ENCODE measurements at regions of chr6 and their contacts with region 1.

Region 1: GRCh38 chr6:45436544-45437438 is 59.1 kb upstream of the SUPT3H start:
- DNase-seq: peak in 1 of 9 donors; percentile 31
- ATAC-seq: peak; percentile 85
- H3K4me3 ChIP-seq: no peak overlapping the region
- H3K4me3 Mint-ChIP-seq: peak overlapping the region in 4 of 10 donors; percentile 2 to 75 (median 48)
- H3K27ac ChIP-seq: no peak overlapping the region
- H3K27ac Mint-ChIP-seq: peak overlapping the region in 2 of 9 donors; percentile 38 to 86
- H3K4me1 ChIP-seq: peaks cover 18 to 32% of the 10 kb centered on the region in 2 donors
- H3K4me1 Mint-ChIP-seq: peaks cover 36 to 71% (median 56%) of the 10 kb centered on the region in 7 donors
- H3K27me3 ChIP-seq: no peaks in the 10 kb centered on the region
- H3K27me3 Mint-ChIP-seq: peaks cover 0 to 7% (median 0%) of the 10 kb centered on the region in 5 donors

Region 2: DNA sequence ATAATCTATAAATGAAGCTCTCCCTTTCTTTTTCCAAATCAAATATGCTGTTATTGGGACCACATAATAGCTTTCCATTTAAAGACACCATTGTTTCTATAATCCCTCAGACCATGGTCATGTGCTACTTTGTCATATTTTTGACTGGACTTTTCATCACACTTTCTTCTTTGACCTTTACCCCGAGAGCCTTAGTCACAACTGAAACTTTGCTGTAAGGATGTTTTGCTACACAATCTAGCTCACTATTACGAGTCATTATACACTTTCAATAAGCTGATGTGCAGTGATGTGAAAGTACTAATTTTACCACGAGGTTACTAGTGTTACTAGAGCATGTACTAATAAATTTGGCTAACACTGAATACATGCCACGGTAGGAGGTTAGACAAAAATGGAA is 475.9 kb before region 1 on chr6:
- CTCF ChIA-PET with region 1: no interaction called
- POLR2A ChIA-PET with region 1: no interaction called
- intact Hi-C with region 1: no loop called
- DNase-seq: no peak
- ATAC-seq: no peak
- H3K4me3 ChIP-seq: no peak overlapping the region
- H3K4me3 Mint-ChIP-seq: no peak overlapping the region
- H3K27ac ChIP-seq: no peak overlapping the region
- H3K27ac Mint-ChIP-seq: no peak overlapping the region
- H3K4me1 ChIP-seq: no peaks in the 10 kb centered on the region
- H3K4me1 Mint-ChIP-seq: peaks cover 0 to 11% (median 5%) of the 10 kb centered on the region in 7 donors
- H3K27me3 ChIP-seq: no peaks in the 10 kb centered on the region
- H3K27me3 Mint-ChIP-seq: no peaks in the 10 kb centered on the region

Region 3: DNA sequence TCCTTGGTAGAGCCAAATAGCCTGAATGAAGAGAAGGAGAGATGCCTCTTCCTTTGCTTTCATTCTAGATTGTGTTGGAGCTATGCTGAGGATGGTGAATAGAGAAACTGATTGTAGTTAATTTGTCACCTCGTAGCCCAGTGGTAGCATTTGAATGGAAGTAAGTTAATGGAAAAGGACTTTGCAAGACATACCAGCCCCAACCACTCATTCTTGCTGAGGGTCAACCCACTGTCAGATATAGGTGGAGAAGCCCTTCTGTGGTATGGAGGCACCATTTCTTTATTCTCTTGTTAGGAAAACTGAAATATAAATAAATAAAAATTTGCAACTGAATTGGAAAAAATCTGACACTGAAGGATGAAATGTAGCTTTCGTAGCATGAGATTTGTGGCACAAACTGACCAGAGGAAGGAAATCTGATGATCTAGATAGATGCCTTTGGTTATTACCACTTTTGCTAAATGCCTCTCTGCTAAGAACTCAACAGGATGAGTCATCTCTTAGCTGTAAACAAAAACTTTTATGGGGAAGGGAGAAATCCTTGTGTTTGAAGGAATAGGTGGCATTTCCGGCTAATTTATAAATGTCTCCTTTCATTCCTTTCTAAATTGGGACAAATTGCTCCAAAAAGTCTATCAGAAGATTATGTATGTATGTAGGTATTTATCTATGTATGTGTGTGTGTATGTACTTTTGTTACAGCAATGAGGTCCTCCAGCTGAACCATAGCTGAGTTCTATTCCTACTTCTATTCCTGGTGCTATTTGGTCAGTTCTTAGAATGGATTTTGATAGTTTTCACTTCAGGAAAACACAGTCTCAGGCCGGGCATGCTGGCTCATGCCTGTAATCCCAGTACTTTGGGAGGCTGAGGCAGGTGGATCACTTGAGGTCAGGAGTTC is 17.5 kb after region 1 on chr6:
- CTCF ChIA-PET with region 1: no interaction called
- POLR2A ChIA-PET with region 1: interaction called, 4 read pairs
- intact Hi-C with region 1: loop called (anchors 1 to 2 kb)
- DNase-seq: no peak
- ATAC-seq: peak; percentile 58
- H3K4me3 ChIP-seq: no peak overlapping the region
- H3K4me3 Mint-ChIP-seq: peak overlapping the region in 1 of 10 donors; percentile 11
- H3K27ac ChIP-seq: no peak overlapping the region
- H3K27ac Mint-ChIP-seq: no peak overlapping the region
- H3K4me1 ChIP-seq: peaks cover 16 to 30% of the 10 kb centered on the region in 2 donors
- H3K4me1 Mint-ChIP-seq: peaks cover 23 to 50% (median 30%) of the 10 kb centered on the region in 7 donors
- H3K27me3 ChIP-seq: no peaks in the 10 kb centered on the region
- H3K27me3 Mint-ChIP-seq: peaks cover 0 to 3% (median 0%) of the 10 kb centered on the region in 5 donors

Region 4: GRCh38 chr6:45472382-45472781 is 35.6 kb after region 1 on chr6:
- CTCF ChIA-PET with region 1: no interaction called
- POLR2A ChIA-PET with region 1: no interaction called
- intact Hi-C with region 1: no loop called
- DNase-seq: no peak
- ATAC-seq: no peak
- H3K4me3 ChIP-seq: no peak overlapping the region
- H3K4me3 Mint-ChIP-seq: no peak overlapping the region
- H3K27ac ChIP-seq: no peak overlapping the region
- H3K27ac Mint-ChIP-seq: no peak overlapping the region
- H3K4me1 ChIP-seq: no peaks in the 10 kb centered on the region
- H3K4me1 Mint-ChIP-seq: peaks cover 0 to 20% (median 10%) of the 10 kb centered on the region in 7 donors
- H3K27me3 ChIP-seq: no peaks in the 10 kb centered on the region
- H3K27me3 Mint-ChIP-seq: no peaks in the 10 kb centered on the region

Region 5: DNA sequence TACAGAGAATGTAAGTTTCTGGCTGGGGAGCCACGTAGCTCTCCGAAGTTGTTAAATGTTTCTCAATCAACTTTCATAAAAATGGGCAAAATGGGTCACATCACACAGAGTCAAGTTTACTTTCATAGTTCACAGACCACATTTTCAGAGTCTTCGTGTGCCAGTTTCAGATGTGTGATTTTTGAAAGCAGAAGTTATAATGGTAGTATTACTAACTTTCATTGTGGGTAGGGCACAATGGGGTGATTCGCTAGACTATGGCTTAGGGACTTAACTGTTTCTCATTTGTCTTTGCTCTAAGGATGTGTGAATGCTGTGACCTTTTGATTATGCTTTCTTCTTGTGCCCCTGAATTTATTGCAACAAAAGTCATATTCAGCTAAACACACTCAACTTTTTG is 49.9 kb after region 1 on chr6:
- CTCF ChIA-PET with region 1: no interaction called
- POLR2A ChIA-PET with region 1: no interaction called
- intact Hi-C with region 1: loop called in 1 of 2 experiments (anchors 5 kb)
- DNase-seq: no peak
- ATAC-seq: peak; percentile 45
- H3K4me3 ChIP-seq: no peak overlapping the region
- H3K4me3 Mint-ChIP-seq: no peak overlapping the region
- H3K27ac ChIP-seq: no peak overlapping the region
- H3K27ac Mint-ChIP-seq: no peak overlapping the region
- H3K4me1 ChIP-seq: peaks cover 17 to 20% of the 10 kb centered on the region in 2 donors
- H3K4me1 Mint-ChIP-seq: peaks cover 21 to 38% (median 31%) of the 10 kb centered on the region in 7 donors
- H3K27me3 ChIP-seq: no peaks in the 10 kb centered on the region
- H3K27me3 Mint-ChIP-seq: peaks cover 0 to 4% (median 0%) of the 10 kb centered on the region in 5 donors

Measured in naive thymus-derived CD4-positive, alpha-beta T cell (primary cell).